Mammary epithelial cell (primary cell): ENCODE measurements at regions of chr1 and their contacts with region 1.

Region 1: GRCh38 chr1:13813398-13814012 is 113.5 kb downstream of the PRDM2 start:
- DNase-seq: no peak
- H3K4me3 ChIP-seq: no peak overlapping the region
- H3K27ac ChIP-seq: no peak overlapping the region
- H3K4me1 ChIP-seq: no peaks in the 10 kb centered on the region
- H3K27me3 ChIP-seq: no peaks in the 10 kb centered on the region
- CTCF ChIP-seq: peak; percentile 37 to 51

Region 2: GRCh38 chr1:13667691-13668090 is 145.8 kb before region 1 on chr1:
- CTCF ChIA-PET with region 1: no interaction called
- dilution Hi-C with region 1: no loop called
- in situ Hi-C with region 1: no loop called
- intact Hi-C with region 1: loop called (anchors 5 kb)
- DNase-seq: no peak
- H3K4me3 ChIP-seq: no peak overlapping the region
- H3K27ac ChIP-seq: no peak overlapping the region
- H3K4me1 ChIP-seq: peaks cover 3% of the 10 kb centered on the region
- H3K27me3 ChIP-seq: no peaks in the 10 kb centered on the region
- CTCF ChIP-seq: no peak

Region 3: DNA sequence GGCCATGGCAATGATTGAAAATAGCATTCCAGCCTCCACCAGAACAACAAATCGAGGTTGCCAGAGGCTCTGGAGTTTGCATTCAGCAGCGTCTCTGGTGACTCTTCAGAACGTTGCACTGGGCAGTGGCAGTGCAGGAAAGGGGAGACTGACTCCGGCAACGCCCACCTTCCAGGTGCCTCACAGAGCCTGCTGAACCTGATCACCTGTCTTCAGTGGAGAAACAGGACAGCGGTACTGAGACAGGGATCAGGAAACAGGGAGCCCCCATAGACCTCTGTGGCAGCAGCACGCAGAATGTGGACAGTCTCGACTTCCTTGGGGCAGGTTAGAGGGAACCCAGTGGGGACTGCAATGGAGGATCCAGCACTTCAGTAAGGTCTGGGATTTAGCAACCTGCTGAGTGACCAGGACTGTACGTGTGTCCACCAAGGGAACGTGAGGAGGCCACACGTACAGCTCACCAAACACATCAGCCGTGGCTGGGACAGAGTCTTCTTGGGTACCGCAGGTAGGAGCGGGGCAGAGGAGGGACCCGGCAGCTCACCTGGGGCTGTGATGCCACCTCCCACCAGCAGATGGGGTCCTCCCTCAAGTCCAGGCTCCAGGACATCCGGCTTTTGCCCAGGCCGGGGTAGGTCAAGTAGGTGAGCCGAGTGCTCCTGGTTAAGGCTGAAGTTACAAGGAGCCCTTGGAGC is 15.1 kb after region 1 on chr1:
- CTCF ChIA-PET with region 1: no interaction called
- dilution Hi-C with region 1: no loop called
- in situ Hi-C with region 1: no loop called
- intact Hi-C with region 1: no loop called
- DNase-seq: no peak
- H3K4me3 ChIP-seq: no peak overlapping the region
- H3K27ac ChIP-seq: no peak overlapping the region
- H3K4me1 ChIP-seq: no peaks in the 10 kb centered on the region
- H3K27me3 ChIP-seq: no peaks in the 10 kb centered on the region
- CTCF ChIP-seq: peak; percentile 10 to 46